ENCODE measurements at regions of chr1 and their contacts with region 1.

Region 1: DNA sequence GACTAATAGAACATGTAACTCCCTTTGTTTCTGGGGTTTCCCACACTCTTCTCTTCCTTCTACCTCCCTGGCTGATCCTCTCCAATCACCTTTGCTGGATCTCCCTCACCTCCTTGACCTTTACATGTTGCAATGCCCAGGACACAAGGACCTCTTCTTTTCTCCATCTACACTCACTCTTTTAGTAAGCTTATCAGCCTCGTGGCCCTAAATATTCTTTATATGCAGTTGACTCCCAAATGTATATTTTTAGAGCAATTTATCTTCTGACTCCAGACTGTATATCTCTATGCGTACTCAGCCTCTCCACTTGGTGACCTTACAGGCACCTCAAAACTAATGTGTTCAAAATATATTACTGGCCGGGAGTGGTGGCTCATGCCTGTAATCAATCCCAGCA is 18.4 kb upstream of the CLSPN start:
- DNase-seq: no peak
- H3K4me3 ChIP-seq: no peak overlapping the region
- CTCF ChIP-seq: no peak

Region 2: DNA sequence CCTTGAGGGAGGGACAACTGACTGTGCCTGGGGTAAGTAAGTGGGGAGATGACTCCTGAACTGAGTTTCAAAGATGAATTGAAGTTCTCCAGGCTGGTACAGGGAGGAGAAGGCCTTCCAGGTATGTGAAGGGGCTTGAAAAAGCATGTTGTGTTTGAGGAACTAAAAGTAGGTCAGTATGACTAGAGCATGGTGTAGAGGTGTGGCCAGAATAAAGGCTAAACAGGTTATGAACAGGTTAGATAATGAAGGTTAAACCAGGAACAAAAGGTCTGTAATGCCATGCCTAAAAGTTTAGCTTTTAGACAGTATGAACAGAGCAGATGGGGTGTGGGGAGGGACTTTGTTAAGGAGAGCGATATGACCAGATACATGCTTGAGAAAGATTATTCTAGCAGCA is 11.0 kb before region 1 on chr1:
- CTCF ChIA-PET with region 1: interaction called, 18 read pairs
- POLR2A ChIA-PET with region 1: no interaction called
- DNase-seq: no peak
- H3K4me3 ChIP-seq: no peak overlapping the region
- CTCF ChIP-seq: no peak

Region 3: DNA sequence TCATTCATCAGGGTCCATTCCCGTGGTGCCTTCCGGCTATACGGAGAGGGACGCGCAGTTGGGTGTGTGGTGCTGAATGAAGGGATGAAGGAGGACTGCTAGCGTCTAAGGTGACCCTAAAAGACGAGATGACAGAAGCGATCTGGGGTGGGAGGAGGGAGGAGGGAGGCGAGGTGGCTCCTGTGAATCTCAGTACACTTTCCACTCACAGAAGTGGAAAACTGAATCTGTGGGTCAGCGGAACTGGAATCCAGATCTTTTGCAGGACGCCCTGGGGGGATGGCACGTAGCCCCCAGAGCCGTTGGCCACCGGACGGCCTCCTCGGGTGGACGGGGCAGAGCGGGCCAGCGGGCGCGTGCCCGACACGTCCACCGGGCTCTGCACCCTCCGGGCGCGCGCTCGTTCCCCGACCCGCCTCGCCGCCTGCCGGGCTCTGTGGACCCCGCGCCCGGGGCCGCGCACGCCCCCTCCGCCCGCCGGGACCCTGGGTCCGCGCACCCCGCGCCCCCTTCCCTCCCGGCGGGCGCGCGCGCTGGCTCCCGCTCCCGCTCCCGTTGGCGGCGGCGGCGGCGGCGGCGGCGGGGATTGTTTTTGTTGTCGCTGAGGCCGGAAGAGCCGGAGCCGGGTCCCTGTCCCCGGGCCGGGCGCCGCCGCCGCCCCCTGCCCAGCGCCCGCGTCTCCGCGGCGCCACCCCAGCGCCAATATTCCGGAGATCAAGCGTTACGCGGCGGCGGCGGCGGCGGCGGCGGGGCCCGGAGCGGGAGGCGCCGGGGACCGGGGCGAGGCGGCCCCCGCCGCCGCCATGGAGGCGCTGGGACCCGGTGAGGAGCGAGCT is 19.7 kb after region 1 on chr1 and contains the start of gene AGO4:
- CTCF ChIA-PET with region 1: no interaction called
- POLR2A ChIA-PET with region 1: no interaction called
- DNase-seq: no peak
- H3K4me3 ChIP-seq: peak within 1 kb of the TSS; percentile 72
- CTCF ChIP-seq: no peak

Region 4: GRCh38 chr1:35882945-35883634 is 95.0 kb after region 1 on chr1 and contains the start of gene AGO1:
- CTCF ChIA-PET with region 1: no interaction called
- POLR2A ChIA-PET with region 1: no interaction called
- DNase-seq: peak; percentile 21
- H3K4me3 ChIP-seq: peak within 1 kb of the TSS; percentile 92
- CTCF ChIP-seq: peak; percentile 100